Right ventricle myocardium inferior (tissue), 1 donor: ENCODE measurements at regions of chr12 and their contacts with region 1.

Region 1: DNA sequence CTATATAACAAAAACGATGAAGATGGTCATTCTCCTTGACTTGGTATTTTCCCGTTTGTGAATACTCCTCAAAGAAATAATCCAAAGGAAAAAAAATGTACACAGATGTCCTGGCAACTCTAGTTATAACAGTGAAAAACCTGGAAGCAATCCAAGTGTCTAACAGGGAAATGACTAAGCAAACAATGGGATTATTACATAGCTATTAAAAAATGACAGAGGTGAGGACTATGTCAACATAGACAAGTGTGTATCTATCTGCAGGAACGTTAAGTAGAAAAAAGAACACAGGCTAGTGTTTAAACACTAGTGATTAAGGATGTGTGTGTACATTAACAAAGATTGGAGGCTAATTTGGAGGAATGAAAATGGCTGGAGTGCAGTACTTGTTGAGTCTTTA is 5.9 kb upstream of the APOLD1 start:
- DNase-seq: no peak
- ATAC-seq: peak; percentile 23

Region 2: DNA sequence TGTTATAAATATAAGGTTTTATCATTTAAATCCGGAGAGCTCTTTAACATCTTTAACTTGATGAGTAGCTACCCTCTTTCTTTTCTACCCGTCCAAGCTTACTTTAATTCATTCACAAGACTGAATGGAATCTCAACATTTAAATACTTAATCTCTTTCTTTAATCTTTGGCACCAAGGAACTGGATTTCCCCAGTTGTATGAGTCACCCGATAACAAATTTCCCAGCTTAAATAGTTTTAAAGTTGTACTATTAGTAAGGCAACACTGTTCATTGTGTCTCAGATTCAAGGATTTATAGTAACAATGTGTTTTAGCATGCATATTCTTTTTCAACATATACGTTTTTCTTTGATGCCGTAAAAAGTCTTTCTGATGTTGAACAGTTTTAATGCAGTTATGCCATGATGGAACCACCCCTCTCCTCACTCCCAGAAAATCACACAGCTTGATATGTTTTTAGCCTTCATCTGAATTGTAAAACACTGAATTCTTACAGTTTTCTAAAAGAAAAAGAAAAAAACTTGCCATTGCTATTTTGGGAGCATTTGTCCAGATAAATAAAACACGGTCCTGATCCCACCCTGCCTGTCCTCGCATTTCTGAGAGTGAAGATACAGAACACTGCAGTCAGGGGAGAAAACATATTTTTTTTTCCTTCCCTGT is 496.6 kb before region 1 on chr12:
- intact Hi-C with region 1: no loop called
- DNase-seq: no peak
- ATAC-seq: no peak

Region 3: DNA sequence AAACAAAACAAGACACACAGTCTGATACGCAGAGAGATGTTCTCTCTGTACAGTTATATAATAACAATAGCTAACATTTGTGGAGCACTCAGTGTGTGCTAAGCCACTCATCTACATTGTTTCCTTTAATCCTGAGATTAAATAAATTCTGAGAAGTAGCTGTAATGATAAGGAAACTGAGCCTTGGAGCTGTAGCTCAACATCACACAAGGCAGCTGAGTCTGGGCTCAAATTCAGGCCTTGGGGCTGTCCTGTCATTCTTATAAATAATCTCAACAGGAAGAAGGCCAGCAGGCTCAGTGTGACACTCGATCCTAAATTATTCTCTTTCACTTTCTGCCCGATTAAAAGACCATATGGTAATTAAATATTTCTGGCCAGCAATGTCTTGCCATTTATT is 37.9 kb before region 1 on chr12:
- intact Hi-C with region 1: loop called (anchors 5 kb)
- DNase-seq: no peak
- ATAC-seq: no peak